CD4-positive, alpha-beta memory T cell (primary cell): ENCODE measurements at regions of chr15 and their contacts with region 1.

Region 1: GRCh38 chr15:48352474-48353072 is 21.3 kb downstream of the DUT start:
- DNase-seq: peak; percentile 42 to 55 (median 49)
- H3K4me3 ChIP-seq: no peak overlapping the region
- H3K4me3 Mint-ChIP-seq: peak overlapping the region in 2 of 8 donors; percentile 40 to 53
- H3K27ac ChIP-seq: no peak overlapping the region
- H3K27ac Mint-ChIP-seq: no peak overlapping the region
- H3K4me1 ChIP-seq: no peaks in the 10 kb centered on the region
- H3K4me1 Mint-ChIP-seq: peaks cover 0 to 5% (median 2%) of the 10 kb centered on the region in 4 donors
- H3K27me3 ChIP-seq: no peaks in the 10 kb centered on the region
- H3K27me3 Mint-ChIP-seq: peaks cover 3 to 7% of the 10 kb centered on the region in 2 donors

Region 2: DNA sequence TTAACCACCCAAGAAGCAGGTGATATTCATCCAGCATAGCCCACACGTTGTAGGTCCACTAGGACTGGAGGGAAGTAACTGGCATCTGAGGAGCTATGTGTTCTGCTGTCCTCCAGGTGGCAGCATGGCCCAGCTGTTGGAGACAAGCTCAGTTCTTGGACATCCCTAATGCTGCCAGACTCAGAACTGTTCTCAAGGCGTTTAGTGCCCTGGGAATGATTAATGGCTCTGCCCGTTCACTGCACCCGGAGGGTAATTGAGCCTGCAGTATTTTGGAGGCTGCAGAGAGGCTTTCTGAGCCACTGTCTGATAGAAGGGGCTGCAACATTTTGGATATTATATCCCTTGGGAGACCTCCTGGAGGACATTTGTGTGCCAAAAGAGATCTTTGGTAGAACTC is 1156.5 kb before region 1 on chr15:
- CTCF ChIA-PET with region 1: interaction called, 14 read pairs
- POLR2A ChIA-PET with region 1: no interaction called
- intact Hi-C with region 1: no loop called
- DNase-seq: peak; percentile 3 to 37 (median 8)
- H3K4me3 ChIP-seq: no peak overlapping the region
- H3K4me3 Mint-ChIP-seq: no peak overlapping the region
- H3K27ac ChIP-seq: no peak overlapping the region
- H3K27ac Mint-ChIP-seq: no peak overlapping the region
- H3K4me1 ChIP-seq: no peaks in the 10 kb centered on the region
- H3K4me1 Mint-ChIP-seq: no peaks in the 10 kb centered on the region
- H3K27me3 ChIP-seq: no peaks in the 10 kb centered on the region
- H3K27me3 Mint-ChIP-seq: no peaks in the 10 kb centered on the region

Region 3: GRCh38 chr15:47717036-47717611 is 635.4 kb before region 1 on chr15 and contains the start of gene SEMA6D:
- CTCF ChIA-PET with region 1: no interaction called
- POLR2A ChIA-PET with region 1: no interaction called
- intact Hi-C with region 1: loop called (anchors 10 kb)
- DNase-seq: no peak
- H3K4me3 ChIP-seq: no peak within 1 kb of the TSS
- H3K4me3 Mint-ChIP-seq: peak within 1 kb of the TSS in 1 of 8 donors; percentile 13
- H3K27ac ChIP-seq: no peak within 1 kb of the TSS
- H3K27ac Mint-ChIP-seq: no peak within 1 kb of the TSS
- H3K4me1 ChIP-seq: no peaks in the 10 kb centered on the region
- H3K4me1 Mint-ChIP-seq: peaks cover 0 to 10% (median 3%) of the 10 kb centered on the region in 4 donors
- H3K27me3 ChIP-seq: peaks cover 11% of the 10 kb centered on the region
- H3K27me3 Mint-ChIP-seq: peaks cover 28 to 38% of the 10 kb centered on the region in 2 donors
- total RNA-seq, gene SEMA6D: not detected

Region 4: GRCh38 chr15:48336940-48337339 is 15.6 kb before region 1 on chr15:
- CTCF ChIA-PET with region 1: interaction called, 26 read pairs
- POLR2A ChIA-PET with region 1: no interaction called
- intact Hi-C with region 1: loop called (anchors 2 kb)
- DNase-seq: no peak
- H3K4me3 ChIP-seq: no peak overlapping the region
- H3K4me3 Mint-ChIP-seq: no peak overlapping the region
- H3K27ac ChIP-seq: no peak overlapping the region
- H3K27ac Mint-ChIP-seq: peak overlapping the region in 1 of 7 donors; percentile 44
- H3K4me1 ChIP-seq: peaks cover 11% of the 10 kb centered on the region
- H3K4me1 Mint-ChIP-seq: peaks cover 13 to 24% (median 18%) of the 10 kb centered on the region in 4 donors
- H3K27me3 ChIP-seq: no peaks in the 10 kb centered on the region
- H3K27me3 Mint-ChIP-seq: no peaks in the 10 kb centered on the region